ENCODE measurements at regions of chr10 and their contacts with region 1.

Region 1: GRCh38 chr10:74213571-74214162 is 62.6 kb downstream of the ADK start:
- DNase-seq: peak; percentile 39 to 50 (median 42)
- H3K4me3 ChIP-seq: no peak overlapping the region
- H3K4me3 Mint-ChIP-seq: no peak overlapping the region
- H3K27ac ChIP-seq: no peak overlapping the region
- H3K27ac Mint-ChIP-seq: peak overlapping the region in 1 of 7 donors; percentile 75
- H3K4me1 ChIP-seq: no peaks in the 10 kb centered on the region
- H3K4me1 Mint-ChIP-seq: peaks cover 15 to 22% (median 16%) of the 10 kb centered on the region in 4 donors
- H3K27me3 ChIP-seq: no peaks in the 10 kb centered on the region
- H3K27me3 Mint-ChIP-seq: no peaks in the 10 kb centered on the region

Region 2: DNA sequence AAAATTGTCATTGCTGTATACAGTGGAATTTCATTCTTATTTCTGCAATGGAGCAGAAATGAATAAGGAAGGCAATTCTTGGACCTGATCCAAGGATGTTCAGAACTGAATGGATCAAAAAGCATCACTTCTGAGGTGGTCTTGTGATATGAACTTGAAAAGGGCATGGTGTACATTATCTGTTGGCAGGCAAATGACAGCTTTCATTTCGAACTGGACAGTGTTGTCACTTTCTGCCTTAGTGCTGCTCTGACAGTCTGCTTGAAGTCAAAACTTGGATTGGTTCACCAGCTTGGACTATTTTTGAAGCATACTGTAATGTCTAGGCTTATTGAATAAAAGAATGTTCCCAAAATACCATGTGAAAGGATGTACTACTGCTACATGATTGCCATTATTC is 163.7 kb before region 1 on chr10:
- CTCF ChIA-PET with region 1: no interaction called
- POLR2A ChIA-PET with region 1: no interaction called
- intact Hi-C with region 1: no loop called
- DNase-seq: no peak
- H3K4me3 ChIP-seq: no peak overlapping the region
- H3K4me3 Mint-ChIP-seq: no peak overlapping the region
- H3K27ac ChIP-seq: no peak overlapping the region
- H3K27ac Mint-ChIP-seq: no peak overlapping the region
- H3K4me1 ChIP-seq: peaks cover 23% of the 10 kb centered on the region
- H3K4me1 Mint-ChIP-seq: peaks cover 17 to 39% (median 28%) of the 10 kb centered on the region in 4 donors
- H3K27me3 ChIP-seq: no peaks in the 10 kb centered on the region
- H3K27me3 Mint-ChIP-seq: no peaks in the 10 kb centered on the region

Region 3: GRCh38 chr10:74120911-74121310 is 92.8 kb before region 1 on chr10:
- CTCF ChIA-PET with region 1: interaction called, 15 read pairs
- POLR2A ChIA-PET with region 1: no interaction called
- intact Hi-C with region 1: no loop called
- DNase-seq: no peak
- H3K4me3 ChIP-seq: no peak overlapping the region
- H3K4me3 Mint-ChIP-seq: no peak overlapping the region
- H3K27ac ChIP-seq: no peak overlapping the region
- H3K27ac Mint-ChIP-seq: peak overlapping the region in 5 of 7 donors; percentile 15 to 48 (median 25)
- H3K4me1 ChIP-seq: no peaks in the 10 kb centered on the region
- H3K4me1 Mint-ChIP-seq: no peaks in the 10 kb centered on the region
- H3K27me3 ChIP-seq: no peaks in the 10 kb centered on the region
- H3K27me3 Mint-ChIP-seq: no peaks in the 10 kb centered on the region

Region 4: GRCh38 chr10:74156919-74157289 is 56.8 kb before region 1 on chr10:
- CTCF ChIA-PET with region 1: interaction called, 13 read pairs
- POLR2A ChIA-PET with region 1: no interaction called
- intact Hi-C with region 1: no loop called
- DNase-seq: no peak
- H3K4me3 ChIP-seq: no peak overlapping the region
- H3K4me3 Mint-ChIP-seq: no peak overlapping the region
- H3K27ac ChIP-seq: no peak overlapping the region
- H3K27ac Mint-ChIP-seq: no peak overlapping the region
- H3K4me1 ChIP-seq: peaks cover 15% of the 10 kb centered on the region
- H3K4me1 Mint-ChIP-seq: peaks cover 14 to 24% (median 22%) of the 10 kb centered on the region in 4 donors
- H3K27me3 ChIP-seq: no peaks in the 10 kb centered on the region
- H3K27me3 Mint-ChIP-seq: no peaks in the 10 kb centered on the region

Region 5: GRCh38 chr10:74176380-74177139 is 37.1 kb before region 1 on chr10:
- CTCF ChIA-PET with region 1: interaction called, 13 read pairs
- POLR2A ChIA-PET with region 1: interaction called, 18 read pairs
- intact Hi-C with region 1: loop called (anchors 1 kb)
- DNase-seq: peak; percentile 95 to 98 (median 97)
- H3K4me3 ChIP-seq: peak overlapping the region; percentile 82 to 92
- H3K4me3 Mint-ChIP-seq: peak overlapping the region; percentile 90 to 94 (median 93)
- H3K27ac ChIP-seq: peak overlapping the region; percentile 76
- H3K27ac Mint-ChIP-seq: peak overlapping the region; percentile 96 to 98 (median 97)
- H3K4me1 ChIP-seq: peaks cover 42% of the 10 kb centered on the region
- H3K4me1 Mint-ChIP-seq: peaks cover 24 to 49% (median 39%) of the 10 kb centered on the region in 4 donors
- H3K27me3 ChIP-seq: no peaks in the 10 kb centered on the region
- H3K27me3 Mint-ChIP-seq: no peaks in the 10 kb centered on the region

Region 6: DNA sequence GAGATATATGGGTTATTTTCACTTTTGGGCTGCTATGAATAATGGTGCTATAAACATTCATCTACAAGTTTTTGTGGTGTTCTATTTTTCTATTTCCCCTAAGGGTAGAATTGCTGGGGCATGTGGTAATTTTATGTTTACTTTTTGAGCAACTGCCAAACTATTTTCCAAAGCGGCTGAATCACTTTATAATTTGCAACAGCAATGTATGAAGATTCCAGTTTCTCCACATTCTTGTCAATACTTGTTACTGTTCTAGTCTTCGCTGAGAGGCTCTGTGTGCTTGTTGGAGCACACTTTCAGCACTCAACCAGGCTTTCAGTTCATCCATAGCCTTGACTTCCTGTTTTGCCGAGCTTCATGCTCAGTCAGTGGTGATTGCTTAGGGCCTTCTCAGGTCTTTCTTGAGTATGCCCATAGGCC is 23.7 kb before region 1 on chr10:
- CTCF ChIA-PET with region 1: interaction called, 18 read pairs
- POLR2A ChIA-PET with region 1: interaction called, 7 read pairs
- intact Hi-C with region 1: no loop called
- DNase-seq: peak in 4 of 5 donors; percentile 28 to 40 (median 34)
- H3K4me3 ChIP-seq: peak overlapping the region; percentile 7 to 11
- H3K4me3 Mint-ChIP-seq: peak overlapping the region in 7 of 8 donors; percentile 42 to 91 (median 77)
- H3K27ac ChIP-seq: peak overlapping the region; percentile 28
- H3K27ac Mint-ChIP-seq: peak overlapping the region; percentile 73 to 98 (median 95)
- H3K4me1 ChIP-seq: peaks cover 41% of the 10 kb centered on the region
- H3K4me1 Mint-ChIP-seq: peaks cover 38 to 74% (median 57%) of the 10 kb centered on the region in 4 donors
- H3K27me3 ChIP-seq: no peaks in the 10 kb centered on the region
- H3K27me3 Mint-ChIP-seq: no peaks in the 10 kb centered on the region

Region 7: DNA sequence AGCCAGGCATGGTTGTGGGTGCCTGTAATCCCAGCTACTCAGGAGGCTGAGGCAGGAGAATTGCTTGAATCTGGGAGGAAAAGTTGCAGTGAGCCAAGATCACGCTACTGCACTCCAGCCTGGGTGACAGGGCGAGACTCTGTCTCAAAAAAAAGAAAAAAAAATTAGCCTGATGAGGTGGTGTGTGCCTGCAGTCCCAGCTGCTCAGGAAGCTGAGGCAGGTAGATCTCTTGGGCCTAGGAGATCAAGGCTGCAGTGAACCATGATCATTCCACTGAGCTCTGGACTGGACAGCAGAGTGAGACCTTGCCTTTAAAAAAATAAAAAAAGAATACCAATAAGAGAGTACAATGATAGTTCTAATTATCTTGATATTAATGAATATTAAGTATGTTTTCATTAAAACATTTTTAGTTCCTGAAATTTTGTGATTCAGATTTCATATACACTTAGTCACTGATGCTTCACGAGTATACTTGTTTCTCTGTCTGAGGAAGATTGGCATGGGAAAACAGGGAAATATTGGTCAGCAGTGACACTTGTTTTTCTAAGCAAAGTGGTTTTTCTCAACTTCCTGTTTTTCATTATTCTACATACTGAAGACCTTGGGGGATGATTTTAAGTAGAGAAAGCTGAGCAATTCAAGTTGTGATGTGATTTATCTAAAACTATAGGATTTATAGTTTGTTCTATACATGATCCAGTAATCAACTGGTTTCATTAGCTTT is 14.2 kb after region 1 on chr10:
- CTCF ChIA-PET with region 1: interaction called, 50 read pairs
- POLR2A ChIA-PET with region 1: interaction called, 15 read pairs
- intact Hi-C with region 1: no loop called
- DNase-seq: peak in 3 of 5 donors; percentile 24 to 28 (median 26)
- H3K4me3 ChIP-seq: no peak overlapping the region
- H3K4me3 Mint-ChIP-seq: peak overlapping the region; percentile 57 to 85 (median 76)
- H3K27ac ChIP-seq: peak overlapping the region; percentile 31
- H3K27ac Mint-ChIP-seq: peak overlapping the region; percentile 89 to 98 (median 94)
- H3K4me1 ChIP-seq: peaks cover 39% of the 10 kb centered on the region
- H3K4me1 Mint-ChIP-seq: peaks cover 16 to 40% (median 27%) of the 10 kb centered on the region in 4 donors
- H3K27me3 ChIP-seq: no peaks in the 10 kb centered on the region
- H3K27me3 Mint-ChIP-seq: no peaks in the 10 kb centered on the region

Region 8: DNA sequence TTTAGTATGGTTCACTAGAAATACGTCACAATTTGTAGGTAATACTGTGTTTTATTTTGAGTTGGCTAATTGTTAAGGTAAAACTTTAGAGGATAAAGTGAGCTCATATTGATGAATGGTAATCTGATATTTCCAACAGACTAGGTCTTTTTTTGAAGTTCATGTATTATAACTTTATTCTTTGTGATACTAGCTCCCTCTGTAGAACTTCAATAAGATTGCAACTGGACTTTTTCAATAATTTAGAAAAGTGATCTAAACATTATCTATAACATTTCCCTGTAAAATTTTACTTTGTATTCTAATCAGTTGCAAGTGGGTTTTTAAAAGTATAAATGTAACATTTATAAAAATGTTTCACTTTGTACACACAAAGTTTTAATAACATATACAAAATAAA is 20.9 kb after region 1 on chr10:
- CTCF ChIA-PET with region 1: interaction called, 40 read pairs
- POLR2A ChIA-PET with region 1: interaction called, 3 read pairs
- intact Hi-C with region 1: loop called (anchors 2 kb)
- DNase-seq: peak in 4 of 5 donors; percentile 18 to 39 (median 28)
- H3K4me3 ChIP-seq: no peak overlapping the region
- H3K4me3 Mint-ChIP-seq: no peak overlapping the region
- H3K27ac ChIP-seq: no peak overlapping the region
- H3K27ac Mint-ChIP-seq: peak overlapping the region in 1 of 7 donors; percentile 13
- H3K4me1 ChIP-seq: no peaks in the 10 kb centered on the region
- H3K4me1 Mint-ChIP-seq: peaks cover 0 to 16% (median 8%) of the 10 kb centered on the region in 4 donors
- H3K27me3 ChIP-seq: no peaks in the 10 kb centered on the region
- H3K27me3 Mint-ChIP-seq: no peaks in the 10 kb centered on the region

Region 9: DNA sequence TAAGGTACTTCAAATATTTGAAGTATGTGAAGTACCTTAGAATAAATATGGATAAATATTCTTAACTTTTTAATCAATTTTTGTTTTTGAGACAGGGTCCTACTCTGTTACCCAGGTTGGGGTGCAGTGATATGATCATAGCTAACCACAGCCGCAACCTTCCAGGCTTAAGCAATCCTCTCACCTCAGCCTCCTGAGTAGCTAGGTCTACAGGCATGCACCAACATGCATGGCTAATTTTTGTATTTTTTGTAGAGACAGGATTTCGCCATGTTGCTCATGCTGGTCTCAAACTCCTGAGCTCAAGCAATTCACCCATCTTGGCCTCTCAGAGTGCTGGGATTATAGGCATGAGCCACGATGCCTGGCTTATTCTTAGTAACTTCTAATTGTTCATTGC is 493.3 kb after region 1 on chr10:
- CTCF ChIA-PET with region 1: no interaction called
- POLR2A ChIA-PET with region 1: no interaction called
- intact Hi-C with region 1: no loop called
- DNase-seq: no peak
- H3K4me3 ChIP-seq: no peak overlapping the region
- H3K4me3 Mint-ChIP-seq: no peak overlapping the region
- H3K27ac ChIP-seq: no peak overlapping the region
- H3K27ac Mint-ChIP-seq: no peak overlapping the region
- H3K4me1 ChIP-seq: no peaks in the 10 kb centered on the region
- H3K4me1 Mint-ChIP-seq: no peaks in the 10 kb centered on the region
- H3K27me3 ChIP-seq: no peaks in the 10 kb centered on the region
- H3K27me3 Mint-ChIP-seq: no peaks in the 10 kb centered on the region